ENCODE measurements at regions of chr17 and their contacts with region 1.

Region 1: DNA sequence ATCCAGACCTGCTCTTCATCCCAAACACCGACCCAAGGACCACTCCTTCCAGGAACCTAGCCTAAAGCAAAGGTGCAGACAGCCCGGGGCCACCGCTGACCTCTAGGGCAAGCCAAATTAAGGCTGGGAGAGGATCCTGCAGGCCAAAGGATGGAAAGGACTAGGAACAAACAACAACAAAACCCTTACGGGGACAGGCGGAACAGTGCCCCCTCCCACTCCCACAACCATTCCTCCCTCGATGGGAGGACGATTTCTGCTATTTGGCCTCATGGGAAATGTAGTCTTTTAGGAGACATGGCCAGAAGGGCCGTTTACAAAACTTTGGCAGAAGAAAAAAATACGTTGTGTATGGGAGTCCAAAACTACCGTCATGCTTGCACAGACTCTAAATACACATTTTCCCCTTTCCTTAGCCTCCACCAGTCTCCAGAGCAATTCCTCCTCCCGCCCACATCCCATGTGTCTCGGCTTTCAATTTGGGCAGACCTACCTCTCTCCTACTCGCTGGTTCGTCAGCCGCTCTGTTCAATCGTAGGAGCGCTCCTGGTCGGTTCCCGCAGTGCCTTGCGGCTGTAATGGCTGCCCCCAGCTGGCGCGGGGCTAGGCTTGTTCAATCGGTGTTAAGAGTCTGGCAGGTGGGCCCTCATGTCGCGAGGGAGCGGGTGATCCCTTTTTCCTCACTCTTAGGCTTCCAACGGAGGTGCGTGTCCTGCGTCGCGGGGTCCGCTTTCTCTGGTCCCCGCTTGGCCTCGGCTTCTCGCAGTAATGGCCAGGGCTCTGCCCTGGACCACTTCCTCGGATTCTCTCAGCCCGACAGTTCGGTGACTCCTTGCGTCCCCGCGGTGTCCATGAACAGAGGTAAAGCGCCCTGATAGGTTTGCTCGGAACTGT is at the start of gene ERAL1:
- DNase-seq: peak; percentile 96
- H3K4me3 ChIP-seq: peak within 1 kb of the TSS; percentile 66 to 90 (median 78)
- H3K27ac ChIP-seq: peak within 1 kb of the TSS; percentile 61 to 89 (median 82)
- H3K4me1 ChIP-seq: peaks cover 10 to 25% (median 18%) of the 10 kb centered on the region in 6 donors
- H3K27me3 ChIP-seq: no peaks in the 10 kb centered on the region
- CTCF ChIP-seq: no peak
- POLR2A ChIP-seq: peak in 2 of 3 donors; percentile 14 to 38
- total RNA-seq, gene ERAL1: 28.4 to 51.9 (median 38.8) TPM

Region 2: GRCh38 chr17:28902819-28903545 is 48.3 kb after region 1 on chr17 and contains the start of gene DHRS13:
- intact Hi-C with region 1: loop called (anchors 10 kb)
- DNase-seq: peak; percentile 99
- H3K4me3 ChIP-seq: peak within 1 kb of the TSS; percentile 63 to 95 (median 82)
- H3K27ac ChIP-seq: peak within 1 kb of the TSS; percentile 65 to 99 (median 92)
- H3K4me1 ChIP-seq: peaks cover 25 to 69% (median 55%) of the 10 kb centered on the region in 6 donors
- H3K27me3 ChIP-seq: no peaks in the 10 kb centered on the region
- CTCF ChIP-seq: peak; percentile 80 to 99 (median 97)
- POLR2A ChIP-seq: no peak
- total RNA-seq, gene DHRS13: 14.7 to 51.2 (median 21.2) TPM

Measured in spleen (tissue), 13 donors.